A549 (cell line): ENCODE measurements at regions of chr13 and their contacts with region 1.

Region 1: DNA sequence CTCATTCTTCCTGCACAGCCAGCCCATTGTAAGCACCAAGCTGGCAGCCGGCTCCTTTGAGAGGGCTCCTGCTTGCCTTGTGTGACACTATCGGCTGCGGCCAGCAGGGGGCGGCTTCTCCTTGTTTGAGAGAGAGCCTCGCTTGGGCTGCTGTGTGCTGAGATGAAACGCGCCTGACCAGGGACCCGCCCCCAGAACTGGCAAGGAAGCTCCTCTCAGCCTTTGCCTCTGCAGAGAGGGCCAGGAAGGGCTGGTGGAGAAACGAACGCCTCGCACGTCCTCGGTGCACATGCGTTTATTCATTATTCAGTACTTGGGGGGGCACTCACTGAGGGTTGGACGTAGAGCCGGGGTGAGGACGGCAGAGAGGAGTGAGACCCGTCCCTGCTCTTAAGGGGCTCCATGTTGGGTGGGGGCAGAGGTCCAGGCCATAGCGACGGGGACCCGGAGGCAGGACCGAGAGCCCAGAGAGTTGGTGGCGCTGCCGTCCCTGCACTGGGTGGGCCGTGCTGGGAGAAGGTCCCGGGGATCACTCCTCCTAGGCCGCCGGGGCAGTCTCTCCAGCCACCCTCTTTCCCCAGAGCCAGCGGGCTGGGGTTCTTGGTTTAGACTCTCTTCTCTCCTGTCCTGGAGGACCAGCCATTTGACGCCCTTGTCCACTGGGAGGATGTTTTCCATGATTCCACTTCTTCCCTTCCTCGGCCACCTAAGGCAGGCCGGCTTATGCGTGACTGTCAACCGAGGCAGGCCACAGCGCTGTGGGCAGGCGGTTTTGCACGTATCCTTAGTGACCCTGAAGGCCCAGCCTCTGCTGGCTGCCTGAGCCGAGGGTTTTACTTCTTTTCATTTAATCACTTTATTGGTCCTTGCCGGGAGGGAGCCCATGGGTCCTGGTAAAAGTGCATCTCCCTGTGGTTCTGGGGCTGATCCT is 174.5 kb downstream of the KATNAL1 start:
- DNase-seq: peak; percentile 76 to 82
- ATAC-seq: peak; percentile 96 to 100
- H3K4me3 ChIP-seq: no peak overlapping the region
- H3K27ac ChIP-seq: peak overlapping the region in 1 of 2 experiments; percentile 71; a peak in 2 of 6 replicates
- H3K4me1 ChIP-seq: no peaks in the 10 kb centered on the region
- CTCF ChIP-seq: peak; percentile 69
- EP300 ChIP-seq: no peak
- POLR2A ChIP-seq: no peak
- RAD21 ChIP-seq: peak; percentile 86 to 87

Region 2: GRCh38 chr13:29771247-29771646 is 361.6 kb before region 1 on chr13:
- CTCF ChIA-PET with region 1: interaction called, 10 read pairs
- POLR2A ChIA-PET with region 1: no interaction called
- DNase-seq: peak in 1 of 2 experiments; percentile 36
- ATAC-seq: peak in 1 of 2 experiments; percentile 56; a peak in 2 of 6 replicates
- H3K4me3 ChIP-seq: no peak overlapping the region
- H3K27ac ChIP-seq: no peak overlapping the region
- H3K4me1 ChIP-seq: peaks cover 3% of the 10 kb centered on the region; the same call in 1 of the 3 replicates
- CTCF ChIP-seq: peak; percentile 60
- EP300 ChIP-seq: no peak
- POLR2A ChIP-seq: no peak
- RAD21 ChIP-seq: peak; percentile 72 to 75

Region 3: GRCh38 chr13:30148171-30148754 is 15.4 kb after region 1 on chr13:
- CTCF ChIA-PET with region 1: interaction called, 69 read pairs
- POLR2A ChIA-PET with region 1: no interaction called
- DNase-seq: no peak
- ATAC-seq: no peak
- H3K4me3 ChIP-seq: no peak overlapping the region
- H3K27ac ChIP-seq: no peak overlapping the region
- H3K4me1 ChIP-seq: peaks cover 4% of the 10 kb centered on the region
- CTCF ChIP-seq: no peak
- EP300 ChIP-seq: no peak
- POLR2A ChIP-seq: no peak
- RAD21 ChIP-seq: no peak

Region 4: GRCh38 chr13:30158774-30159445 is 26.0 kb after region 1 on chr13:
- CTCF ChIA-PET with region 1: interaction called, 38 read pairs
- POLR2A ChIA-PET with region 1: no interaction called
- DNase-seq: no peak
- ATAC-seq: peak; percentile 50 to 74; a peak in 3 of 6 replicates
- H3K4me3 ChIP-seq: no peak overlapping the region
- H3K27ac ChIP-seq: no peak overlapping the region
- H3K4me1 ChIP-seq: no peaks in the 10 kb centered on the region
- CTCF ChIP-seq: peak; percentile 12; the same call in 2 of the 3 replicates
- EP300 ChIP-seq: no peak
- POLR2A ChIP-seq: no peak
- RAD21 ChIP-seq: peak; percentile 36 to 45; a peak in 4 of 5 replicates

Region 5: GRCh38 chr13:30408319-30409101 is 275.6 kb after region 1 on chr13:
- CTCF ChIA-PET with region 1: interaction called, 15 read pairs
- POLR2A ChIA-PET with region 1: no interaction called
- DNase-seq: peak; percentile 69 to 91
- ATAC-seq: peak; percentile 97 to 98
- H3K4me3 ChIP-seq: peak overlapping the region; percentile 33
- H3K27ac ChIP-seq: peak overlapping the region; percentile 73 to 82
- H3K4me1 ChIP-seq: peaks cover 16% of the 10 kb centered on the region; the same call in 2 of the 3 replicates
- CTCF ChIP-seq: peak; percentile 56
- EP300 ChIP-seq: no peak
- POLR2A ChIP-seq: peak; percentile 57
- RAD21 ChIP-seq: peak; percentile 29 to 70; a peak in 4 of 5 replicates